Kidney (tissue), 22 donors: ENCODE measurements at regions of chr6 and their contacts with region 1.

Region 1: GRCh38 chr6:24855395-24856245 is 56.9 kb upstream of the ARMH2 start:
- DNase-seq: peak in 4 of 5 donors; percentile 73 to 82 (median 76)
- H3K4me3 ChIP-seq: peak overlapping the region in 1 of 3 donors; percentile 18
- H3K27ac ChIP-seq: no peak overlapping the region
- H3K4me1 ChIP-seq: peaks cover 0 to 4% (median 0%) of the 10 kb centered on the region in 3 donors
- H3K27me3 ChIP-seq: no peaks in the 10 kb centered on the region
- CTCF ChIP-seq: peak; percentile 84

Region 2: GRCh38 chr6:25061289-25061936 is 205.8 kb after region 1 on chr6:
- intact Hi-C with region 1: loop called (anchors 10 kb)
- DNase-seq: peak in 1 of 5 donors; percentile 30
- H3K4me3 ChIP-seq: no peak overlapping the region
- H3K27ac ChIP-seq: no peak overlapping the region
- H3K4me1 ChIP-seq: no peaks in the 10 kb centered on the region
- H3K27me3 ChIP-seq: no peaks in the 10 kb centered on the region
- CTCF ChIP-seq: no peak